Dendritic cell treated with granulocyte-macrophage colony-stimulating factor and Interleukin-4, amounts not matched to agents 40 ng/mL and 50 ng/mL, for 4 days (primary cell): ENCODE measurements at regions of chr1 and their contacts with region 1.

Region 1: GRCh38 chr1:50368179-50369012 is 54.8 kb downstream of the DMRTA2 start:
- H3K4me3 Mint-ChIP-seq: no peak overlapping the region
- H3K27ac Mint-ChIP-seq: no peak overlapping the region
- H3K4me1 Mint-ChIP-seq: no peaks in the 10 kb centered on the region
- H3K27me3 Mint-ChIP-seq: peaks cover 45% of the 10 kb centered on the region

Region 2: DNA sequence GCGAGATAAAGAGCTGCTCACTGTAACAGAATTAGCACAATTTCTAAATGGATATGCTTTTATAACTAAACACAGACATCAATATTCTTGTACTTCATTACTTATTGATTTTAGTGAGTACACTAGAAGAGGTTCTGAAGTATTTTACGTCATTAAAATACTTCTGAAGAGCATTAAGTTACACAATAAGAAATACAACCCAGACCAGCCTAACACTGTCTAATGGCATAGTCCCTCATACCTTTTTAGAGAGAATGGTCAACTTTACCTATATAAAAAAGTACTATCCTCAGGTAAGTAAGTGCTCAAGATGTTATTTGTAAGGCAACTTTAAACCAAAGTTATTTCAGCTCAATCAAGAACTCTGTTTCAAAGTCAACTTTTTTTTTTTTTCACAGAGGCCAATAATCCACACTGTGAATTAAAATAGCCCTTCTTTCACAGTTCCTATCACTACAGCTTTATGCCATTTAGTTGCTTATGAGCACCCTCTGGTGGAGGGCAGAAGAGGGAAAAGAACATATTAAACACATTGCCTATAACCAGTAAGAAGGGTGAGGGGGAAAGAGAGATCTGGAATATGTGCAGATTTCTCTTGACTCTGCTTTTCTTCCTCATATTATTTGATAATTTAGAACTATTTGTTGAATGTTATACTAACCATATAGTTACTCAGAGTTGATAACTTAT is 236.9 kb after region 1 on chr1:
- intact Hi-C with region 1: loop called (anchors 1 kb)
- H3K4me3 Mint-ChIP-seq: no peak overlapping the region
- H3K27ac Mint-ChIP-seq: no peak overlapping the region
- H3K4me1 Mint-ChIP-seq: no peaks in the 10 kb centered on the region
- H3K27me3 Mint-ChIP-seq: no peaks in the 10 kb centered on the region

Region 3: DNA sequence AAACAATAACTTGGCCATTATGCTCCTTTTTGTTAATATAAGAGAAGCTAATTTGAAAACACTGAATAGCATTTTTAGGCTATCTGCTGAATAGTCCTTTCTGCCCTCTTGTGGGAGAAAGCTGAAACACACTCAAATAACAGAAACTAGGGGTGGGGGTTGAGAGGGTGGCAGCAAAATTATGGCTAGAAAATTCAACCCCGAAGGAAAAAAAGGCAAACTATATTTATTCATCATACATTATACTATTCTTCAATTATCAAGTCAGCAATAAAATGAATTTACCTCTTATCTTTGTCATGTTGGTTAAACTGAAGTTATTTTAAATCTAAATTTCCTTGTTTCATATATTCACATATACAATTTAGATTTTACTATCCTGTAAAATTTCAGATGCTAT is 335.7 kb after region 1 on chr1:
- intact Hi-C with region 1: loop called (anchors 1 kb)
- H3K4me3 Mint-ChIP-seq: no peak overlapping the region
- H3K27ac Mint-ChIP-seq: no peak overlapping the region
- H3K4me1 Mint-ChIP-seq: no peaks in the 10 kb centered on the region
- H3K27me3 Mint-ChIP-seq: no peaks in the 10 kb centered on the region

Region 4: GRCh38 chr1:50735443-50735842 is 367.0 kb after region 1 on chr1:
- intact Hi-C with region 1: loop called (anchors 10 kb)
- H3K4me3 Mint-ChIP-seq: no peak overlapping the region
- H3K27ac Mint-ChIP-seq: no peak overlapping the region
- H3K4me1 Mint-ChIP-seq: peaks cover 27% of the 10 kb centered on the region
- H3K27me3 Mint-ChIP-seq: no peaks in the 10 kb centered on the region